Cardiac septum (tissue), 1 donor: ENCODE measurements at regions of chr9 and their contacts with region 1.

Region 1: DNA sequence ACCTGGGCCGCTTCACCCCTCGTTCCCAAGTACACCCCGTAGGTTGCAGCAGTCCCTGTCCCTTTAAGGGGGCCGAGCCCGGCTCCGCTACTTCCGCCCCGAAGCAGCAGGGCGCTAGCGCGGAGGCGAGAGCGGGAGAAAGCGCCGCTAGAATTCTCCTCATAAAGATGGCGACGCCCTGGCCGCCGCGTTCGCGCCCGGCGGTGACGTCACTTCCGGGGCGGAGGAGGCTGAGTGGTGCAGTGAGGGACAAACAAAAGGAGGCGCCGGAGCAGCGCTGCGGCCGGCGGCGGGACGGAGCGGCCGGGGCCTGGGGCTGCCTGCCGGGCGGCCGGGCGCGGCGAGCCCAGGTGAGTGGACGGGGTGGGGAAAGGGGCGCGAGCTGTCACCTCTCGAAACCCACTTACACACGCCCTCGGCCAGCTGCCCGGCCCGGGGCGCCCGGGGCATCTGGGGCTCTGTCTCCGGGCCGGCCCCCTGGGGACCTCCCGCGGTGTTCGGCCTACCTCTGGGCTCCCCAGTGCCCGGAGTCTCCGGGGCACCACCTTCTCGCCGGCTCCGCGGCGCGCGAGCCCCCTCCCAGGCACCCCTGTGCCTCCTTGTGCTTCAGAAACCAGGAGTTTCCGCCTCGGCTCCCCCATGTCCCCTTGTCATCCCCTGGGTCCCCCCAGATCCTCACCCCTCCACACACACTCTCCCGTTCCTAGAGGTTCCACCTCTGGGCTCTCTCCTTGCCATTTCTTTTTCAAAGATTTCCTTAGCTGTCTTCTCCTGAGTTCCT is at the starts of genes KYAT1 and LRRC8A:
- DNase-seq: peak; percentile 99
- total RNA-seq, gene KYAT1: 9.2 TPM
- total RNA-seq, gene LRRC8A: 24.2 TPM

Region 2: DNA sequence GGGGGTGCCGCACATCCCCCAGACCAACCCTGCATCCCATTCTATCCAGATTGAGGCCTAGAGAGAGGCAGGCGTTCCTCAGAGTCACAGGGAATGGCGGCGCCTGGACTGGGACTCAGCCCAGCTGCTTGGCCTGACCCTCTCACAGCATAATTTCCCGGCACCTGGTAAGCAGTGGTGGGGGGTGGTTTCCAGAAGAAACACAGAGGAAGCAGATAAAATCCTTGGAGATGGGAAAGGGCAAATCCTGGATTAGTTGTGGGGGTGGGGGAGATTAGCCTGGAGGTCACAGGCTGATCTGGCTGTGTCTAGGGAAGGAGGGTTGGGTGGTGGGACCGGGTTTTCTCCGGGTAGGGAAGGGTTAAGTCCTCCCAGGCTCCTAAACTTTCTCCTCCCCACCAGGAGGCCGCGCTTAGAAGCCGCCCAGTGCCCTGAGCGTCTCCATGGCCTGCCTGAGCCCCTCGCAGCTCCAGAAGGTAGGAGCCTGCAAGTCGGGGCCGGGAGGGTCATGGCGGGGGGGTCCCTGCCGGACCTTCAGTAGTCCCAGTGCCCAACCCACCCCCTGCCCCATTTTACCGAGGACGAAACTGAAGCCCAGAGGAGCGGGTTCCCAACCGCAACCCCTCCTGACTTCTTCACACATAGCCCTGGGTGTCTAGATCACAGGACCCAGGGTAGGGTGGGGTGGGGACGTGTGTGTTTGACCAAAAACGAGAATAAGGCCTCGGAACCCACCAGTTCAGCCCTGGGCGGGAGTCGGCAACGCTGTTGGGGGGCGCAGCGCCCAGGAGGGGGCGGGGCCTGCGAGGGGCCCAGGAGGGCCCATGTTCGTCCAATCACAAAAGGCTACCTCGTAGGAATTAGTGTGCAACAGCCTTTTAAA is 40.0 kb after region 1 on chr9:
- intact Hi-C with region 1: loop called (anchors 2 kb)
- DNase-seq: no peak

Region 3: GRCh38 chr9:129023036-129023907 is 141.2 kb after region 1 on chr9:
- intact Hi-C with region 1: no loop called
- DNase-seq: no peak